ENCODE measurements at regions of chr5 and their contacts with region 1.

Region 1: DNA sequence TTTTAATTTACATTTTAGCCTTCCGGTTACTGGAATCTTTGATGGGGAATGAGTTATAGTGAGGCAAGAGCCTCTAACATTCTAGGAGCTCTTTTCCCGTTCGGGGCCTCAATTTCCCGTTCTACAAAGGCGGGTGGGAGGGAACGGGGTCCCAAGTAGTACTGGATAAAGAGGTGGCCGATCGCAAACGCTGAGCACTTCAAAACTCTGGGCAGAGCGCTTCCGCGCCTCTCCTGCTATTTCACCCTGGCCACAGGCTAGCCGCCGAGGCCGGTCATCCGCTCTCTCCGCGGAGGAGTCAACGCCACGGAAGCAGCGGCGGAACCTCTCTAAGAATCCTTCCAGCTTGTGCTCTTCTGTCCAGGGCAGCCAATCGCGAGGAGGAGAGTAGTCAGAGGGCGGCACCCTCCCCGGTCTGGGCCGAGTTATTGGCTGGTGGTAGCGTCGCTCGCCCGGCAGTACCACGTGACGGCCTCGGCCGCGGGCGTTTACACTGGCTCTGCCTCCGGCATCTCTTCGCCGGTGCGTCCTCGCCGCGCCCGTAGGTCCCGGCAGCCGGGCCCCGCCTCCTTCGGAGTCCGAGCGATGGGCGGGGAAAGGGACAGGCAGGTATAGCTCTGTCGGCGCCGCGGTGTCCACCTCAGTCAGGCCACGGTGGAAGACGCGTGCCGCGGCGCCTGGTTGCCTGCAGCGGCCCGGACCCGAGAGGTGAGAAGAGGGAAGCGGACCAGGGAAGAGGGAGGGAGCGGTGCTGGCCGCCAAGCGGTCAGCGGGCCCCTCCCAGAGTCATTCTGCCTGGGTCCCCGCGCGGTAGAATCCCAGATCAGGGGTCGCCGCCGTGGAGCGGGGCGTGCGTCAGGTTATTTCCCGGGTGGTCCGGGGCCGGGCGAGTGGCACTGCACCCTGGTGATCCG is at the start of gene SLC26A2:
- DNase-seq: peak; percentile 98
- CTCF ChIP-seq: no peak

Region 2: DNA sequence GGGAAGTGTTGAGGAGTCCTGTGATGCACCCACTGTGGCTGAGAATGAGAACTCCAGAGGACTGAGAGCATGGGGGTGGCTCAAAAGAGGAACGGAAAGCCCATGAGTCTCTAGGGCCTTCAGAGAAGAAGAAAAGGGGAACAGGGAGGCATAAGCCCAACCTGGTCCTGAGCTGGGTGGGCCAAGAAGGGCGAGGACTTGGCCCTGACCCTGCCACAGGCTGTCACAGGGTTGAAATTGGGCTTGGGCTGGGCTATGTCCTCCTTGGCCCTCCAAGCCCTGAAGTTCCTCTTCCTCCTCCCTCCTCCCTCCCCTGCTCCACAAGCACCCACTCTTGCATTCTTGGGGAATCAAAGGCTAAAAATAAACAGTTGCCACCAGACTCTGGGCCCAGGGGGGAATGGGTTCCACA is 279.7 kb before region 1 on chr5:
- CTCF ChIA-PET with region 1: no interaction called
- POLR2A ChIA-PET with region 1: no interaction called
- DNase-seq: peak; percentile 85
- CTCF ChIP-seq: no peak

Region 3: GRCh38 chr5:149834246-149834855 is 126.2 kb before region 1 on chr5:
- CTCF ChIA-PET with region 1: interaction called, 11 read pairs
- POLR2A ChIA-PET with region 1: no interaction called
- DNase-seq: peak; percentile 77
- CTCF ChIP-seq: peak; percentile 43

Region 4: GRCh38 chr5:149852641-149853330 is 107.7 kb before region 1 on chr5:
- CTCF ChIA-PET with region 1: interaction called, 23 read pairs
- POLR2A ChIA-PET with region 1: no interaction called
- DNase-seq: peak; percentile 71
- CTCF ChIP-seq: peak; percentile 87

Region 5: DNA sequence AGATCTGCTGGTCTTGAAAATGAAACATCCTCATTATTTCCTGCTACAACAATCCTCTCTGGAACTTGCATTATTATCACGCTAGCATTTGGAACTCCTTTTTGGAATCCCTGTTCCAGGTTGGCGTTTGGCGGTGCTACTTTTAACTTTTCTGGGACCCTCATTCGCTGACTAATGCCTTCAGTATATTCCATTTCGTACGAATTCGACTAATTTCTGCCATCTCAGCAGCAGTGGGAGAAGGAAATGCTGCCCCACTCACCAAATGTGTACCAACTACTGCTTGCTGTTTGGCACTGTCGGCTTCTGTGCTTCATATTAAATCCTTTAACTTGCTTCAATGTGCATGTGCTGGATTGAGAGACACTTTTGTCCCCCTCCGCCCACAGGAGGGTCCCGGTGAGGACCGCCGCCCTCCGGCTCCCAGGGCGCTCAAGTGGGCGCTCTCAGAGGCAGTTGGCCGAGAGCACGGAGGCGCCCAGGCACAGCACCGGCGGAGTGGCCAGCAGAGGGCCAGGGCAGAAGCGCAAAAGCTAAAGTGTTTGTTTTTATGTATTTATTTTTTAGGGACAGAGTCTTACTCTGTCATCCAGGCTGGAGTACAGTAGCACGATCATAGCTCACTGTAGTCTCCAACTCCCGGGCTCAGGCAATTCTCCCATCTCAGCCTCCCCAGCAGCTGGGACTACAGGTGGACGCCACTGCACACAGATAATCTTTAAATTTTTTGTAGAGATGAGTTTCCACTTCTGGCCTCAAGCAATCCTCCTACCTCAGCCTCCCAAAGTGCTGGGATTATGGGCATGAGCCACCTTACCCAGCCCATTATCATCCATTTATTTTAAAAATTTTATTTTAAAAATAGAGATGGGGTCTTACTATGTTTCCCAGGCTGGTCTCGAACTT is 27.8 kb before region 1 on chr5:
- CTCF ChIA-PET with region 1: interaction called, 21 read pairs
- POLR2A ChIA-PET with region 1: no interaction called
- DNase-seq: no peak
- CTCF ChIP-seq: no peak

Region 6: DNA sequence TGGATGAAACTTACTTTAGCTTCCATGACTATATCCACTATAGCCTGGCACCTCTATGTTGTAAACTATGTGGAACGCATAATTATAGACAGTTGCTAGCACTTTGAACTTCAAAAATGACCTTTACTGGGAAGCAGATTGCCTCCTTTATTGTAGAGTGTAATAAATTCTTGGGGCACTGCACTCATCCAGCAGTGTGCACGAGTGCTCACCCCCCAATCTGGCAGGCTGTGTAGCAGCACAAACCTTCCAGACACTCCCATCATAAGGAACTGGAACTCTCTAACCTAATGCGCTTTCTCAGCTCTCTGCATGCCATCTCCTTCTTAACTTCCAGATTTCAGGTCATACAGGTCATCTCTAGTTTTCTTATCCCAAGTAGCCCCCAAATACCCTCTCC is 14.4 kb before region 1 on chr5:
- CTCF ChIA-PET with region 1: interaction called, 14 read pairs
- POLR2A ChIA-PET with region 1: no interaction called
- DNase-seq: no peak
- CTCF ChIP-seq: no peak

Region 7: DNA sequence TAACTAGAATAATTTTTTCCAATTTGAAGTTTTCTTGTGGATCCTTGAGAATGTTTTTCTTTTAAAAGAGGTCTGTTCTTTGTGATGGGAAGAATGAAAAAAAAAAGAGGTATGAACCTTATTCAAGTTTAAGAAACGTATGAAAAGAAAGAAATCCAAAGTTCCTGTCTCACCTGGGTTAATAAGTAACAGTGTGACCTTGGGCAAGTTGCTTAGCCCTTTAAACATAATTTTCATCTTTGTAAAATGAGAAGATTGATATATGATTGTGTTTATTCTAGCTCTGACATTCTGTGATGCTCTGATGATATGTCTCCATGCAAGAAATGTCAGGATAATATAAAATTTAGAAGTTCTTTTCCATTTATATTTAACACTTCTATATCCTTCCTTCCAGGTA is 19.4 kb after region 1 on chr5:
- CTCF ChIA-PET with region 1: interaction called, 12 read pairs
- POLR2A ChIA-PET with region 1: interaction called, 3 read pairs
- DNase-seq: no peak
- CTCF ChIP-seq: no peak

Region 8: GRCh38 chr5:150000256-150000989 is 39.9 kb after region 1 on chr5 and contains the starts of genes HMGXB3 and TIGD6:
- CTCF ChIA-PET with region 1: interaction called, 3 read pairs
- POLR2A ChIA-PET with region 1: interaction called, 11 read pairs
- DNase-seq: peak; percentile 95
- CTCF ChIP-seq: no peak

Region 9: GRCh38 chr5:150357326-150358260 is 397.1 kb after region 1 on chr5 and contains the start of gene TCOF1:
- CTCF ChIA-PET with region 1: no interaction called
- POLR2A ChIA-PET with region 1: no interaction called
- DNase-seq: peak; percentile 97
- CTCF ChIP-seq: no peak

Measured in GM10248 (cell line).